ENCODE measurements at regions of chr5 and their contacts with region 1.

Region 1: GRCh38 chr5:61408476-61409168 is 76.6 kb downstream of the ZSWIM6 start:
- DNase-seq: peak; percentile 94
- ATAC-seq: peak; percentile 99
- H3K4me3 Mint-ChIP-seq: peak overlapping the region; percentile 70
- H3K27ac Mint-ChIP-seq: peak overlapping the region; percentile 85
- H3K4me1 Mint-ChIP-seq: peaks cover 29% of the 10 kb centered on the region
- H3K27me3 Mint-ChIP-seq: no peaks in the 10 kb centered on the region
- CTCF ChIP-seq: no peak

Region 2: GRCh38 chr5:60699530-60700382 is 708.9 kb before region 1 on chr5 and contains the start of gene DEPDC1B:
- CTCF ChIA-PET with region 1: no interaction called
- POLR2A ChIA-PET with region 1: no interaction called
- intact Hi-C with region 1: loop called (anchors 1 kb)
- DNase-seq: peak; percentile 79
- ATAC-seq: peak; percentile 89
- H3K4me3 Mint-ChIP-seq: peak within 1 kb of the TSS; percentile 90
- H3K27ac Mint-ChIP-seq: peak within 1 kb of the TSS; percentile 42
- H3K4me1 Mint-ChIP-seq: peaks cover 12% of the 10 kb centered on the region
- H3K27me3 Mint-ChIP-seq: no peaks in the 10 kb centered on the region
- CTCF ChIP-seq: no peak
- total RNA-seq, gene DEPDC1B: 0.44 and 0.98 TPM in 2 replicates

Region 3: DNA sequence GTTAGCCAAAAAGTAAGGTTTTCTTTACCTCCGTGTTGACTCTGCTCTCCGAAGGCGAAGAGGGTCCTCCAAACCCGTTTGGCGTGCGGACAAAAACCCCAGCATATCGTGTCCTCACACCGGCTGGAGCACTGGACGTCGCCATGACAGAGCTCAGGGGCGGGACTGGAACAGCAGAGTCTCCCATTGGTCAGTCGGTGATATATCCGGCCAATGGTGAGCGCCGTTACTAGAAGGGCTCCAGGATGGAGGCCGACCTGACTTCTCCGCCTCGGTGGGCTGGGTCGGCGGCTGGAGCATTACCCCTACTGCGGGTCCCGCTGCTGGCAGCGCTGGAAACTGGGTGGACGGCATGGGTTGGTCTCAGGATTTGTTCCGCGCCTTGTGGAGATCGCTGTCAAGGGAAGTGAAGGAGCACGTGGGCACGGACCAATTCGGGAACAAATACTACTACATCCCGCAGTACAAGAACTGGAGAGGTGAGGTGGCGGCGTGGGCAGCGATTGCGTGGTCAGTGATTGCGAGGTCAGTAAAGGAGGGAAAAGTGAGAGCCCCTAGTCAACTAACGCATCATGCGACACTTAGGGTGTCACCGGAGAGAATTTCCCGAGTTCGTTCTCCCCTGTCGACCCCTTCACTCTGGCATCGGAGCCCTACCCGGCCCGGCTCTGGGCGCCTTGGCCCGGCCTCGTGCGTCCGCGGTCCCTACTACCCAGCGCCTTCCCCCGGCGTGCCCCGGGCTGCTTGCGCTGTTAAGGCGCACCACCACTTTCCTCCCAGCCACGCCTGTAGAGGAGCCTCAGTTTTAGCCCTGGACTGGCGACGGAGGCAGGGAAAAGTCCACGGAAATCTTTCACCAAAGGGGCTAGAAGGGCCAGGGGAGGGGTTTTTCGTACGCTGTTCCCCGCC is 463.5 kb before region 1 on chr5 and contains the starts of genes ERCC8 and NDUFAF2:
- CTCF ChIA-PET with region 1: no interaction called
- POLR2A ChIA-PET with region 1: interaction called, 6 read pairs
- intact Hi-C with region 1: loop called (anchors 5 kb)
- DNase-seq: peak; percentile 75
- ATAC-seq: peak; percentile 98
- H3K4me3 Mint-ChIP-seq: no peak within 1 kb of the TSS
- H3K27ac Mint-ChIP-seq: no peak within 1 kb of the TSS
- H3K4me1 Mint-ChIP-seq: peaks cover 28% of the 10 kb centered on the region
- H3K27me3 Mint-ChIP-seq: no peaks in the 10 kb centered on the region
- CTCF ChIP-seq: no peak
- total RNA-seq, gene ERCC8: 10.7 and 11.2 TPM in 2 replicates
- total RNA-seq, gene NDUFAF2: 13.1 and 20.0 TPM in 2 replicates

Region 4: DNA sequence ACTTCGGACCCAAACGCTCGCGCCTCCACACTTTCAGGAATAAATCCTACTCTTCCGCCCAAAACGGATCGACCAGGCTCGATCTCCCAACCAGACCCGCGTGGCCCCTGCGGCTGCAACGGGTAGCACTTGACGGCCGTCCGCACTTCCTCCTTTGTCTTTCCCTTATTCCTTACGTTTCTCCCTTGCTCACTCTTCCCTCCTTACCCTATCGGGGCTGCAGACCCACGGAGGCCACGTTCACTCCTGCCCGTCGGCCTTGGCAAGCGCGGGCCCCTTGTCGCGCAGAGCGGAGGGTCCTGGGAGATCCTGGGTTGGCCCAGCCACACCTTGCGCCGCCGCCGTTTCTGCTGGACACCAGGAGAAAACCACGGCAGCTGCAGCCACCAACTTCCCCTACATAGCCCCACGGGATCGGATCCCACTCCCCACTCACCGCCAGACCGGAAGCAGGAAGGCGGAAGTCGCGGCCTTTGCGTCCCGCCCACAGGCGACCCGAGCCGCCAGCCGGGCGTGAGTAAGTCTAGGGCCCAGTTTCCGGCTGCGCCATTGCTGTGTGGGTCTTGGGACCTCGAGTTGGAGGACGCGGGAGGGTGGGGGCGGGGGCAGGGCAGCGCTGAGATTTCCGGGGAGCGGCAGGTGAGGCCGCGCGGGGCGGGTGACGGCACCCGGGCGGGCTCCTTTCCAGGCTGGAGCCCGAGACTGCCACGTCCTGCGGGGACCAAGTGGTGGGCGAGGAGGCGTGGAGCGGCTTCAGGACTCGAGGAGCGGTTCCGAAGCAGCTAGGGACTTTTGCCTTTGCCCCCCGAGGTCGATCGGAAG is 246.4 kb before region 1 on chr5 and contains the start of gene SMIM15:
- CTCF ChIA-PET with region 1: no interaction called
- POLR2A ChIA-PET with region 1: interaction called, 3 read pairs
- intact Hi-C with region 1: loop called (anchors 1 kb)
- DNase-seq: peak; percentile 76
- ATAC-seq: peak; percentile 92
- H3K4me3 Mint-ChIP-seq: peak within 1 kb of the TSS; percentile 95
- H3K27ac Mint-ChIP-seq: peak within 1 kb of the TSS; percentile 95
- H3K4me1 Mint-ChIP-seq: peaks cover 30% of the 10 kb centered on the region
- H3K27me3 Mint-ChIP-seq: no peaks in the 10 kb centered on the region
- CTCF ChIP-seq: no peak
- total RNA-seq, gene SMIM15: 35.7 and 36.4 TPM in 2 replicates

Region 5: GRCh38 chr5:61431923-61432620 is 23.4 kb after region 1 on chr5:
- CTCF ChIA-PET with region 1: no interaction called
- POLR2A ChIA-PET with region 1: interaction called, 12 read pairs
- intact Hi-C with region 1: no loop called
- DNase-seq: no peak
- ATAC-seq: no peak
- H3K4me3 Mint-ChIP-seq: no peak overlapping the region
- H3K27ac Mint-ChIP-seq: no peak overlapping the region
- H3K4me1 Mint-ChIP-seq: peaks cover 17% of the 10 kb centered on the region
- H3K27me3 Mint-ChIP-seq: no peaks in the 10 kb centered on the region
- CTCF ChIP-seq: no peak

Region 6: GRCh38 chr5:62412537-62413329 is 1004.1 kb after region 1 on chr5 and contains the start of gene IPO11:
- CTCF ChIA-PET with region 1: no interaction called
- POLR2A ChIA-PET with region 1: no interaction called
- intact Hi-C with region 1: loop called (anchors 2 kb)
- DNase-seq: peak; percentile 99
- ATAC-seq: peak; percentile 94
- H3K4me3 Mint-ChIP-seq: peak within 1 kb of the TSS; percentile 92
- H3K27ac Mint-ChIP-seq: peak within 1 kb of the TSS; percentile 87
- H3K4me1 Mint-ChIP-seq: peaks cover 20% of the 10 kb centered on the region
- H3K27me3 Mint-ChIP-seq: no peaks in the 10 kb centered on the region
- CTCF ChIP-seq: no peak
- total RNA-seq, gene IPO11: 32.9 and 34.7 TPM in 2 replicates